ENCODE measurements at regions of chr4 and their contacts with region 1.

Region 1: DNA sequence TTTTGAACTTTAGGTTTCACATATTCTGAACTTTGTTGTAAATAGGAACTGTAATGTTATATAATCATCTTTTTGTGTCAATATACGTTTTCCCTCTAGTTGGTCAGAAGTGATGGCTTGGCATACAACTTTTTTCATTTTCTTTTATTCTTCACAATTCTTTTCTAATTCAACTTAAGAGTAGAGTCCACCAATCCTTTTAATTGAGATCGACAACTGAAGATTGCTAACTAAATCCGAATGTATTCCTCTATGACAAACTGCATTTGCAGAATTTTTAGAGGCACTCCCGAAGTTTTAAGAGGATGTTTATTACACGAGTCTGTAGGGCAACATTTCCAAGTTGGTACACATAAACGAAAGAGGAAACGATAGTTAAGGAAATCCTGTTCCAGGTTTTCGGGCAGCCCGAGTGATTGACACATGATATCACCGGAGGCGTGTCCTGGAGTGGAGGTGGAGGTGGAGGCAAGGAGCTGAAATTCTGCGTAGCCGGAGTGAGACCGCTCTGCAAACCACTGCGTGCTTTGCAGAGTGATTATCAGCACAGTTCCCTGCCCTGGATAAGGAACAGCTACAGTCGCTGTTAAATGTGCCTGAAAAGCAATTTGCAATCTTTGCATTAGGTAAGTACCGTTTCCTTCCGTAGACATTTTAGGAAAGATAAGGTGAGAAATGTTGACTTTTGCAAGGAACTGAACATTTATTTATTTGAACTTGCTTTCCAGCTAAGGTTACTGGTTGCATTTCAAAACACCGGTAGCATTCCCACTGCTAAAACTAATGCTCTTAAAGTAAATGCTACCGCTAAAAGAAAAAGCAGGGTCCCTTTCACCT is at the start of gene SPRY1:
- DNase-seq: peak; percentile 47
- ATAC-seq: peak; percentile 45
- H3K4me3 Mint-ChIP-seq: peak within 1 kb of the TSS; percentile 88
- H3K27ac Mint-ChIP-seq: peak within 1 kb of the TSS; percentile 59
- H3K4me1 Mint-ChIP-seq: peaks cover 32% of the 10 kb centered on the region
- H3K27me3 Mint-ChIP-seq: peaks cover 12% of the 10 kb centered on the region
- CTCF ChIP-seq: no peak
- total RNA-seq, gene SPRY1: 4.0 and 4.1 TPM in 2 replicates

Region 2: GRCh38 chr4:123102897-123103471 is 293.5 kb before region 1 on chr4:
- CTCF ChIA-PET with region 1: interaction called, 3 read pairs
- POLR2A ChIA-PET with region 1: no interaction called
- intact Hi-C with region 1: loop called (anchors 5 kb)
- DNase-seq: no peak
- ATAC-seq: no peak
- H3K4me3 Mint-ChIP-seq: no peak overlapping the region
- H3K27ac Mint-ChIP-seq: no peak overlapping the region
- H3K4me1 Mint-ChIP-seq: no peaks in the 10 kb centered on the region
- H3K27me3 Mint-ChIP-seq: no peaks in the 10 kb centered on the region
- CTCF ChIP-seq: no peak

Region 3: DNA sequence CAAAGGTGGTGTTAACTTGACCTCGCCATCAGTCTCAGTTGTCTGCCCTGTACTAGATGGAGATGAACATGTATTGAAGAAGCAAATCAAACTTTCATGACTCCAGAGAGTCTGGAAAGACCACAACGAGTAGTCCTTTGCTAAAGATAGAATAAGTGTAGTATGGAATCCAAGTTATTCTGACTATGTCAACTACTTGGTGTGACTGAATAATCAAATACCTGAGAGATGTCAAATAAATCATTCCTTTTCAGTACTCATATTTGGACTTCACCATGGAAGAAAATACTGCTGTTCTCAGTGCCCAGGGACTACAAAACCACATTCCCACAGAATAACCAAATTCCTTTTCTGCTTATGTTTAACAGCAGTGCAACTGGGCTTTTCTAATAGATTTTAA is 161.1 kb before region 1 on chr4:
- CTCF ChIA-PET with region 1: no interaction called
- POLR2A ChIA-PET with region 1: no interaction called
- intact Hi-C with region 1: no loop called
- DNase-seq: no peak
- ATAC-seq: no peak
- H3K4me3 Mint-ChIP-seq: no peak overlapping the region
- H3K27ac Mint-ChIP-seq: no peak overlapping the region
- H3K4me1 Mint-ChIP-seq: no peaks in the 10 kb centered on the region
- H3K27me3 Mint-ChIP-seq: no peaks in the 10 kb centered on the region
- CTCF ChIP-seq: no peak

Region 4: DNA sequence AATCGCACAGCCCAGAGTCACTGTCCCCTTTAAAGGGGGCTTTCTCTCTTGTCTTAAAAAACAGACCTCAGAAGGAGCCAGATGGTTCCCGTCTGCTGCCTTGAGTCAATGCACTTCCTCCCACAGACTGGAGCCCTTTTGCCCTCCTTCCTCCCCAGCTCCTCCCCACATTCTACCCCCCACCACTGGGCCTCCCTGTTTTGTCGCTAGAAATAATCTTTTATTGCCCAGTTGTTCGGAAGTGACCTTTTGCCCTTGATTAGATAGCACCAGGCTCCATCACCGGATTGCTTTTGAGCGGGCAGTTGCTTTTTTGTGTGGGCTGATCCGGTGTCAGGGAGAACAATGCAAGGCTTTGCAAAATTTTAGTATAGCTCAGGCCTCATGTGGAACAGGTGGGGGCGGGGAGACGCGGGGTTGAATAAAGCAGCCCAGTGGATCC is 47.8 kb after region 1 on chr4:
- CTCF ChIA-PET with region 1: interaction called, 5 read pairs
- POLR2A ChIA-PET with region 1: interaction called, 10 read pairs
- intact Hi-C with region 1: loop called (anchors 1 kb)
- DNase-seq: peak; percentile 23
- ATAC-seq: peak; percentile 77
- H3K4me3 Mint-ChIP-seq: peak overlapping the region; percentile 66
- H3K27ac Mint-ChIP-seq: peak overlapping the region; percentile 82
- H3K4me1 Mint-ChIP-seq: peaks cover 43% of the 10 kb centered on the region
- H3K27me3 Mint-ChIP-seq: no peaks in the 10 kb centered on the region
- CTCF ChIP-seq: no peak

Region 5: GRCh38 chr4:123505095-123506010 is 108.8 kb after region 1 on chr4:
- CTCF ChIA-PET with region 1: interaction called, 3 read pairs
- POLR2A ChIA-PET with region 1: no interaction called
- intact Hi-C with region 1: loop called (anchors 1 kb)
- DNase-seq: peak; percentile 22
- ATAC-seq: peak; percentile 40
- H3K4me3 Mint-ChIP-seq: peak overlapping the region; percentile 91
- H3K27ac Mint-ChIP-seq: peak overlapping the region; percentile 68
- H3K4me1 Mint-ChIP-seq: peaks cover 26% of the 10 kb centered on the region
- H3K27me3 Mint-ChIP-seq: peaks cover 13% of the 10 kb centered on the region
- CTCF ChIP-seq: no peak

Region 6: GRCh38 chr4:123606946-123607542 is 210.5 kb after region 1 on chr4:
- CTCF ChIA-PET with region 1: no interaction called
- POLR2A ChIA-PET with region 1: no interaction called
- intact Hi-C with region 1: no loop called
- DNase-seq: no peak
- ATAC-seq: no peak
- H3K4me3 Mint-ChIP-seq: no peak overlapping the region
- H3K27ac Mint-ChIP-seq: no peak overlapping the region
- H3K4me1 Mint-ChIP-seq: peaks cover 17% of the 10 kb centered on the region
- H3K27me3 Mint-ChIP-seq: no peaks in the 10 kb centered on the region
- CTCF ChIP-seq: no peak

Region 7: DNA sequence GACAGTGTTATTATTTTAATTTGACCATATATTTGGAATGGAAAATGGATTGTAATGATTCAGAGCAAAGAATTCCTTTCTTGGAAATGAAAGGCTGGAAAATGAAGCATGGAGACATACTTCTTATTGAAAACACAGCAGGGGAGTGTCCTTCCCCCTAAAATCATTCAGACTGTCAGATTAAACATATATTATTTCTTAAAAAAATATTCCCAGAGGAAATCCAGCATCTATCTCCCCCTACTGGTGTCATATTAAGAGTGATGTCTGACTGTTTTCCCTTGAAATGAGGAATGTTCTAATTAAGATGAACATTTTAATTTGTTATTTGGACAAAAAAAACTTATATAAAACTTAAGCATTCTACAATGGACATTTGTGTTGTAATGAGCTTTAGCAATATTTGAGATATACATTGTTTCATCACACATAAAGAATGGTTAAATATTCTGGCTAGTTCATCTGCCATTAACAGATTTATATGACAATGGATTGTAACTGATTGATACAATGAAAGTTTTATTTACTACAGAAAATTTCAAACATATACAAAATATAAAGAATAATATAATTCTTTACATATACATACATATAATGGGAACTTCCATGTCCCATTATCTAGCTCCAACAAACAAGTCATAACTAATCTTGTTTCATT is 264.7 kb after region 1 on chr4:
- CTCF ChIA-PET with region 1: interaction called, 4 read pairs
- POLR2A ChIA-PET with region 1: interaction called, 3 read pairs
- intact Hi-C with region 1: loop called (anchors 1 kb)
- DNase-seq: no peak
- ATAC-seq: no peak
- H3K4me3 Mint-ChIP-seq: no peak overlapping the region
- H3K27ac Mint-ChIP-seq: no peak overlapping the region
- H3K4me1 Mint-ChIP-seq: peaks cover 12% of the 10 kb centered on the region
- H3K27me3 Mint-ChIP-seq: peaks cover 17% of the 10 kb centered on the region
- CTCF ChIP-seq: no peak

Region 8: DNA sequence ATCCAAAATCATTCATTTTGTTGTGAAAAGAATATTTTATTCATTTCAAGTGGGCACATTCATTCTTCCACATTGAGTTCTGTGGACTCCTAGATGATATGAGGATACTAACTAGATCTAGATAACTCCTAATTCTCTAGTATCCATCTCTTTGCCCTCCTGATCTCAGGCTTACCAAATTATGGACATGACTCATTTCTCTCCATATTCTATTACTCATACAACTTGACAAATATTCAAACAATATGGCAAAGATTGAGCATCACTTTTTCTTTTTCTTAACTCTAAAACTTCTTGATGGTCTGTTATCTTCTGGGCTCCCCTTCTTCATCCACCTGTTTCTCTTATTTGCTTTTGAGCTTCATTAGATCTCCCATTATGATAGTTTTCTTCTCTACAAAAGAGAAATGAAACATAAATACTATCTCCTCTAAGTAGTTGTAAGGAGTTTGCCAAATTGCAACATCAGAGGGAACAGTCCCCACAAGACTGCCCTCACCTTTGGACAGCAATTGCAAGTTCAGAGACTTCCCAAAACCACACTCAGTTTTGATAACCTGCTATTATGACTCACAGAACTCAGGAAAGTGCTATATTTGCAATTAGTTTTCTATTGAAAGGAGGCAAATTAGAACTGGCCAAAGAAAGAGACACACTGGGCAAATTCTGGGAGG is 423.0 kb after region 1 on chr4:
- CTCF ChIA-PET with region 1: no interaction called
- POLR2A ChIA-PET with region 1: no interaction called
- intact Hi-C with region 1: loop called (anchors 10 kb)
- DNase-seq: no peak
- ATAC-seq: no peak
- H3K4me3 Mint-ChIP-seq: no peak overlapping the region
- H3K27ac Mint-ChIP-seq: no peak overlapping the region
- H3K4me1 Mint-ChIP-seq: peaks cover 2% of the 10 kb centered on the region
- H3K27me3 Mint-ChIP-seq: peaks cover 10% of the 10 kb centered on the region
- CTCF ChIP-seq: no peak